Posterior cingulate gyrus (tissue), 11 donors: ENCODE measurements at regions of chr19 and their contacts with region 1.

Region 1: GRCh38 chr19:14496028-14496833 is at the start of gene GIPC1:
- DNase-seq: peak; percentile 96 to 100 (median 98)

Region 2: GRCh38 chr19:14517840-14518505 is 21.7 kb after region 1 on chr19 and contains the start of gene DNAJB1:
- intact Hi-C with region 1: loop called (anchors 2 kb)
- DNase-seq: peak; percentile 71 to 98 (median 78)

Region 3: DNA sequence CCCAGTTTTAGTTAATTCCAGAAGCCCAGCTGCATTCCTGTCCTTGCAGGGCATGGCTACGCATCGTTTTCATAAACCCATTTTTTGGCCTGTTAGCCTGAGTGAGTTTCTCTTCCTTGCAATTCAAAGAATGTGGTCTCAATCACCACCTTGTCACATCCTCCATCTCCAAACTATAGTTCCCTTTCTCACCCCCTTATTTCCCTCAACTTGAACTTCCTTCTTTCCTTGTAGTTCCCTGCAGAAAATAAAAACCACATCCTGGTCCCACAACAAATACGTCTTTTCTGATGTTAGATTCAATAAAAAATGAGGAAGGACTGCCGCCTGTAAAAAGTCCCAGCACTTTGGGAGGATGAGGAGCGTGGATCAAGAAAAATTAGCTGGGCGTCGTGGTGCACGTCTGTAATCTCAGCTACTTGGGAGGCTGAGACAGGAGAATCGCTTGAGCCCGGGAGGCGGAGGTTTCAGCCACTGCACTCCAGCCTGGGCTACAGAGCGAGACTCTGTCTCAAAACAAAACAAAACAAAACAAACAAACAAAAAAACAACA is 165.2 kb after region 1 on chr19:
- intact Hi-C with region 1: no loop called
- DNase-seq: no peak